Heart right ventricle (tissue), 16 donors: ENCODE measurements at regions of chr18 and their contacts with region 1.

Region 1: DNA sequence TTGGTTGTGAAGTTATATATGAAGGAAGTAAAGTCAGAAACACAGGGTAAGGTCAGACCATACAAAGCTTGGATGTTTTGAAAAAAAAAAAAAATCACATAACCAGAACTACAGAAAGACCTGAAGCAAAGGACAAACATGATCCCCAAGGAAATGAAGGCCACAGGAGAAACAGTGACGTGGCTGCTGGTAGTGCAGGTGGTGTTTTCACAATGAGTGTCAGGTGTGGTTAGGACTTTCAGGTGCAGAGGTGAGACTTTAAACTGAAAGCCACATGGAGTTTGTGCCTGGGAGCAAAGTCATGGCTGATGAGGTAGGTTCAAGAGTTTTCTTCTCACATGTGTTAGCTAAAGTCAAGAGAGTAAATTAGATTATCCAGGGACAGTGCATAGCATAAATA is 270.7 kb downstream of the PIEZO2 start:
- DNase-seq: no peak
- ATAC-seq: no peak
- H3K4me3 ChIP-seq: no peak overlapping the region
- H3K27ac ChIP-seq: no peak overlapping the region
- H3K4me1 ChIP-seq: no peaks in the 10 kb centered on the region
- H3K27me3 ChIP-seq: no peaks in the 10 kb centered on the region
- CTCF ChIP-seq: no peak

Region 2: GRCh38 chr18:10936176-10937053 is 57.7 kb after region 1 on chr18:
- intact Hi-C with region 1: no loop called
- DNase-seq: no peak
- ATAC-seq: peak in 1 of 8 donors; percentile 42
- H3K4me3 ChIP-seq: no peak overlapping the region
- H3K27ac ChIP-seq: no peak overlapping the region
- H3K4me1 ChIP-seq: peaks cover 0 to 18% (median 5%) of the 10 kb centered on the region in 9 donors
- H3K27me3 ChIP-seq: peaks cover 0 to 4% (median 0%) of the 10 kb centered on the region in 7 donors
- CTCF ChIP-seq: no peak

Region 3: GRCh38 chr18:11178951-11179549 is 300.3 kb after region 1 on chr18:
- intact Hi-C with region 1: loop called in 1 of 10 experiments (anchors 10 kb)
- DNase-seq: peak; percentile 20 to 42
- ATAC-seq: peak; percentile 51 to 88 (median 66)
- H3K4me3 ChIP-seq: no peak overlapping the region
- H3K27ac ChIP-seq: peak overlapping the region in 1 of 10 donors; percentile 35
- H3K4me1 ChIP-seq: peaks cover 0 to 9% (median 0%) of the 10 kb centered on the region in 9 donors
- H3K27me3 ChIP-seq: no peaks in the 10 kb centered on the region
- CTCF ChIP-seq: no peak

Region 4: DNA sequence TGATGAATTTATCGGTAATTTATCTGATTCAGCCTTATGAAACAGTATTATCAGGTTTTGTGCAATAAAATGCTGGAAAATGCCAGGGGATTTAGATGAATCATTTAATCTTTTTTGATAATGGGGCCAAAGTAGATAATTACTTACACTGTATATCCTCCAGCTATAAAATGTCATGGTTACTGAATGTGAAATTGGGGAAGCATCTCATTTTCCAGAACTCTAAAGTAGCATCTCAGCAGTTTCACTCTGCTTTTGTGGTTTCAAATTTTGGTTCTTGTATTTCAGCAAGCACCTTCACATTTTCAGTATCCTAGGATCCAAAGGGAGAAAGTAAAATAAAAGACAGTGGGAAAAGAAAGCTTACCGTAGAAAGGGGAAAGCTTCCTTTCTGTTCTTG is 1227.8 kb after region 1 on chr18:
- intact Hi-C with region 1: loop called in 1 of 10 experiments (anchors 10 kb)
- DNase-seq: no peak
- ATAC-seq: no peak
- H3K4me3 ChIP-seq: no peak overlapping the region
- H3K27ac ChIP-seq: no peak overlapping the region
- H3K4me1 ChIP-seq: no peaks in the 10 kb centered on the region
- H3K27me3 ChIP-seq: peaks cover 0 to 20% (median 0%) of the 10 kb centered on the region in 7 donors
- CTCF ChIP-seq: no peak